ENCODE measurements at regions of chr16 and their contacts with region 1.

Region 1: DNA sequence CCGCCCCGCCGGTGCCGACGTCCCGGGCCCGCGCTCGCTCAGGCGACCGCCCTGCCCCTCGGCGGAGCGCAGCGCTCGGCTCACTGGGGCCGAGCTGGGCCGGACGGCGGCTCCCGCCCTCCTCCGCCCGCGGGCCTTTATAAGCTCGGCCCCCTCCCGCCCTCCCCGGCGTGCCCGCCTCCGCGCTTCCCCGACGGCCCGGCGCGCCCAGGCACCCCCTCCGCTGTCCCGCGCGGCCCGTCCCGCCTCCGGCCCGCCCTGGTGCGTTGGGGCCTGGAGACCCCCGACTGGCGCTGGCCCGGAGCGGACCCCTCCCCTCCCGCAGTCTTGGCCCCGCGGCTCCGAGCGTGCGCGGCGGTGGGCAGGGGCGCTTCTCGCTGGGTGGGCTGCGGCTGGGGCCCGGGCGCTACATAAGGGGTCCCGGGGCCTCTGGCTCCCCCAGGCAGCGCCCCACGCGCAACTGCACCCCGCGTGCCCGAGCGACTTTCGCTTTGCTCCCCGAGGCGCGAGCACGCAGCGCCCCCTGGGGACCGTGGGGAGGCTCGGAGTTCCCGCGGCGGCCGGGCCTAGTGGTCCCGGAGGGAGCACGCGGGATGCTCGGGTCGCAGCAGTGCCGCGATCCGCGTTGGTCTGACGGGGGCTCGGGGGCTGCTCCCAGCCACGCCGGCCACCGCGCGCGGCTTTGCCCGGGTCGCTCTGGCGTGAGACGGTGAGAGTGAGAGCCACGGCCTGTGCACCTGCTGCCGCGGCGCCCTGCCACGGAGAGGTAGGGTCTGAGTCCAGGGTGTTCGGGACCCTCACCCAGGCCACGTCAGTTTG is at the start of gene PIEZO1:
- DNase-seq: no peak
- ATAC-seq: peak; percentile 48 to 51
- H3K4me3 ChIP-seq: peak within 1 kb of the TSS; percentile 50 to 73 (median 65)
- H3K27ac ChIP-seq: peak within 1 kb of the TSS; percentile 66 to 74 (median 72)
- H3K4me1 ChIP-seq: peaks cover under 1 to 7% of the 10 kb centered on the region in 2 donors
- H3K27me3 ChIP-seq: peaks cover 10 to 14% (median 10%) of the 10 kb centered on the region in 3 donors
- CTCF ChIP-seq: peak; percentile 53 to 83 (median 71)
- POLR2A ChIP-seq: peak; percentile 41 to 45
- total RNA-seq, gene PIEZO1: 9.0 to 37.0 (median 16.5) TPM

Region 2: DNA sequence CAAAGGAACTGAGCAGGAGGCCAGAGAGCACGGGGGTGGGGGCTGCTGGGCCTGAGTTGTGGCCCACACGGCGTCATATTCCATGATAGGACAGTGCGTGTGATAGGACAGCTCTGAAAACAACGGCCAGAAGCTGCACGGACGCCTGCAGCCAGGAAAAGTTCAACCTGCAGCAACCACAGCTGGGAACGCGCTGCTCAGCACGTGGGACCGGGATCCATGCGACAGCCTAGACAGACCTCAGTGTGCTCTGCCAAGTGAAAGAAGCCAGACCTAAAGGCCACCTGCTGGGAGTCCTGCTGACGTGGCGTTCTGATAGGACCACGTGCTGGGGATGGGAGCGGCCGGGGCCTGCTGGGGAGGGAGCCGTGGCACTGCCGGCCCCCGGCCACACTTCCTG is 57.4 kb before region 1 on chr16:
- in situ Hi-C with region 1: no loop called
- intact Hi-C with region 1: no loop called
- DNase-seq: no peak
- ATAC-seq: no peak
- H3K4me3 ChIP-seq: no peak overlapping the region
- H3K27ac ChIP-seq: no peak overlapping the region
- H3K4me1 ChIP-seq: no peaks in the 10 kb centered on the region
- H3K27me3 ChIP-seq: no peaks in the 10 kb centered on the region
- CTCF ChIP-seq: no peak
- POLR2A ChIP-seq: no peak

Region 3: GRCh38 chr16:88743693-88744576 is 41.4 kb before region 1 on chr16:
- in situ Hi-C with region 1: no loop called
- intact Hi-C with region 1: loop called (anchors 1 kb)
- DNase-seq: peak; percentile 27 to 54
- ATAC-seq: peak; percentile 58 to 69
- H3K4me3 ChIP-seq: no peak overlapping the region
- H3K27ac ChIP-seq: no peak overlapping the region
- H3K4me1 ChIP-seq: peaks cover 0 to 10% of the 10 kb centered on the region in 2 donors
- H3K27me3 ChIP-seq: peaks cover 0 to 11% (median 0%) of the 10 kb centered on the region in 3 donors
- CTCF ChIP-seq: peak; percentile 51 to 88 (median 86)
- POLR2A ChIP-seq: no peak

Region 4: DNA sequence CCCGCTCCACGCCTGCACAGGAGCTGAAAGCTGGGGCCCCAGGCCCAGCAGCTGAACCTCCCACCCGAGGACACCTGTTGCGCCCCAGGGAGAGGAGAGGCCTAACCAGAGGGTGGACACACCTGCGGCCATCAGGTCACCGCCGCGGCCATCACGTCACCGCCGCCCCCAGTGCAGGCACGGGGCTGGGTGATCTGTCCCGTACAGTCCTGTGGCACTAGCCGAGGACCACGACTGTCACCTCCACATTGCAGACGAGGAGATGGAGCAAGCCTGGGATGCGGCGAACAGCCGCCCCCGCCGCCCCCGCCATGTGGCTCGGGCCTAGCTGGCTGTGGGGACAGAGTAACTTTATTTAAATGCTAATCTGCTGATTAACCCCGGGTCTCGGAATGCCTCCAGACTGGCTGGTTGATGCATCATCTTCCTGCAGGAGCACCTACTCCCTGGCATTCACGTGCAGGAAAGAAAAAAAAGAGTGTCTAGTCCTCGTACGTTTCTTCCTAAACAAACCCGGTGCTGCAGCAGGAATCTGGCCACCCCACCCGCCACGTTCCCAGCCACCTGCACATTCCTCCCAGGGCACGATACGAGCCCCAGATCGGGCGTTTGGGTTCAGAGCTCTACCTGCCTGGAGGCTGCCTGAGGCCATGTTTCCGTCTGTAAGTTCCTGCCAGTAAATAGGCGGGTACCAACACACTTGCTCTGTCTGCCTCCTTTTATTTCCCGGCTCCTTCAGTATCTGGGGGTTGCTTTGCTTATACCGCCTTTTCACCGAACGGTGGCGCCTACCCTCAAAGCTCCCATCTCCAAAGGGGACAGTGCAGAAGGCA is 30.2 kb before region 1 on chr16:
- in situ Hi-C with region 1: no loop called
- intact Hi-C with region 1: no loop called
- DNase-seq: no peak
- ATAC-seq: no peak
- H3K4me3 ChIP-seq: no peak overlapping the region
- H3K27ac ChIP-seq: no peak overlapping the region
- H3K4me1 ChIP-seq: no peaks in the 10 kb centered on the region
- H3K27me3 ChIP-seq: peaks cover 0 to 6% (median 5%) of the 10 kb centered on the region in 3 donors
- CTCF ChIP-seq: no peak
- POLR2A ChIP-seq: no peak